ENCODE measurements at regions of chr7 and their contacts with region 1.

Region 1: GRCh38 chr7:10939911-10940703 is 33.6 kb upstream of the PHF14 start:
- DNase-seq: peak; percentile 90
- ATAC-seq: peak; percentile 92
- H3K4me3 ChIP-seq: peak overlapping the region; percentile 85 to 96
- H3K27ac ChIP-seq: peak overlapping the region; percentile 83
- H3K4me1 ChIP-seq: peaks cover 15 to 16% of the 10 kb centered on the region in 2 experiments
- H3K27me3 ChIP-seq: 0 out of 2 replicates have a peak, but pooled peaks cover 9% of the 10 kb centered on the region
- CTCF ChIP-seq: no peak
- POLR2A ChIP-seq: peak; percentile 74
- RAD21 ChIP-seq: no peak

Region 2: DNA sequence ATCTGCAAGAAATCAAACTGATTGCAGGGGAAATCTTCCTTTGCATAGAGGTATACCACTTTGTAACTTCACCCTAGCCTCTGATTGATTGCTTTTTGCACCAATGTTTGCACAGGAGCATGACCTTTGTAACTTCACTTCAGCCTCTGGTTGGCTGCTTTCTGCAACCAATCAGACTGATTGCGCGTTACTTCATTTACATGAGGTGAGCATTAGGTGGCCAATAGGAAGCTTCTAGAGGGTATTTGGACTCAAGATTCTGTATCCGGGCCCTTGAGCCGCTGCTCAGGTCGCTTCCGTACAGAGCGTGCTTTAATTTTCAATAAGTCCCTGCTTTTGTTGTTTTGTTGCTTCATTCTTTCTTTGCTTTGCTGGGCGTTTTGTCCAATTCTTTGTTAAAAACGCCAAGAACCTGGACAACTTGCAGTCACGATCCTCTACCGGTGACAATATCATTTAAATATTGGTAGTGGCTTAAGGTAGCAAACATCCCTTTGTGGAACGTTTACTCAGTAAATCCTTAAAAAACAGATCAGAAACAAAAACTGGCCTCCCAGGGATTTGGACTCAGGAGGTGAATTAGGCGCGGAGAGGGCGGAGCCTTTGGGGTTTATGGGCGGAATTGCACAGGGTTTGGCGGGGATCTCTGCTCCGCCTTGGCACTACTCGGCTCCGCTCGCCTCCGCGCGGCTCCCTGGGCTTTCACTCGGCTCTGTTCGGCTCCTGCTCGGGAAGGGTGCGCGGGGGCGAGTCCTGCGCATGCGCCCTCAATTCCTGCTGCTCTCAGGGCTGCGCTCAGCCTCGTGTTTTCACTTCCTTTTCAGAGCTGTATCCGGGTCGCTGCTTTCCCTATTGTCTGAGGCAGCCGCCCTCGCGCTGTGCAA is 33.2 kb after region 1 on chr7 and contains the start of gene PHF14:
- CTCF ChIA-PET with region 1: no interaction called
- POLR2A ChIA-PET with region 1: no interaction called
- RAD21 ChIA-PET with region 1: no interaction called
- intact Hi-C with region 1: loop called (anchors 1 kb)
- DNase-seq: peak; percentile 93
- ATAC-seq: peak; percentile 99
- H3K4me3 ChIP-seq: peak within 1 kb of the TSS; percentile 83 to 92
- H3K27ac ChIP-seq: peak within 1 kb of the TSS; percentile 76
- H3K4me1 ChIP-seq: peaks cover 0 to 21% of the 10 kb centered on the region in 2 experiments; a peak in 3 of 4 replicates
- H3K27me3 ChIP-seq: no peaks in the 10 kb centered on the region
- CTCF ChIP-seq: no peak
- POLR2A ChIP-seq: peak; percentile 23
- RAD21 ChIP-seq: no peak
- total RNA-seq, gene PHF14: 13.8 TPM

Region 3: DNA sequence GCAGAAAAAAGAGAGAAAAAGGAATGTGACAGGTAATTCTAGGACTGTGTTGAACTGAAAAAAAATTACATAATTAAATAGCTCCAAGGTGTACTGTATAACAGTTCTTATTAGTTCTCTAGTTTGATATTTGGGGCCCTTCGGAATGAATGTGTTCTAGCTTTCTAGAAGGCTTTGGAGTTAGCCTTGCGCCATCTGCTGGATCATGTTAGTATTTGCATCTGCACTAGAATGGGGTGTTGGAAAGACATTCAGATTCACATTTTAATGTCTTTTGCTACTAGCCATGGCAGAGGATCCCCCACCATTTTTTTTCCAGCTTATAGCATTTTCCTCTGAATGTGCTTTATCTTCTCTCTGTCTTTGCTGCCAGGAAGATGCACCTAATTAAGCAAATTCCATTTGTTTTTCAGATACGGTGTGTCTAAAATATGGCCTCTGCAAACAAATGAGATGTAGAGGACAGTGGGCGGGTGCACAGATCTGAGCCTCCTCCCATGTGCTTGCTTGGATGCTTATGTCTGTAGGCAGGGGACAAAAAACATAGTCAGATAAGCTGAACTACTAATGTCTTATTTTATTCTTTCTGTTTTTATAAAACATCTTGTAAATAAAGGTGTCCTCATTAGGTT is 272.1 kb after region 1 on chr7:
- CTCF ChIA-PET with region 1: interaction called, 5 read pairs
- POLR2A ChIA-PET with region 1: interaction called, 3 read pairs
- RAD21 ChIA-PET with region 1: no interaction called
- intact Hi-C with region 1: loop called (anchors 1 kb)
- DNase-seq: peak; percentile 42
- ATAC-seq: peak; percentile 93
- H3K4me3 ChIP-seq: no peak overlapping the region
- H3K27ac ChIP-seq: no peak overlapping the region
- H3K4me1 ChIP-seq: no peaks in the 10 kb centered on the region
- H3K27me3 ChIP-seq: no peaks in the 10 kb centered on the region
- CTCF ChIP-seq: peak; percentile 32 to 85 (median 80); a peak in 5 of 6 replicates
- POLR2A ChIP-seq: no peak
- RAD21 ChIP-seq: peak; percentile 65

Measured in HCT116 (cell line).